BJ (cell line): ENCODE measurements at regions of chr11 and their contacts with region 1.

Region 1: DNA sequence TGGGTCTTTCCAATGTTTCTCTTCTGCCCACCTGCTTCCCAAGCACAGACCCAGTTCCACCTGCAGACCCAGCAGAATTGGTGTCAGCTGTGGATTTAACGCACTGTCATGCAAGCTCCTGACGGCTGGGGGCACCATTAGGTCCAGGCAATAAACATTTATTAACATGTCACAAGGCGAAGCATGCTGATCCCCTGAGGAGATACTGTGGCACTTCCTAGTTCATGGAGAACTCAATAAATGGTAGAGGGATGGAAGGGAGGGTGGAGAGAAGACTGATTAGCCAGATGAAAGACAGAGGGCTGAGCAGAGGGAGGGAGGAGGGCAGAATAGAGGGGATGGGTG is 68.3 kb upstream of the TSPAN18 start:
- DNase-seq: no peak
- H3K4me3 ChIP-seq: no peak overlapping the region
- H3K27me3 ChIP-seq: peaks cover 1% of the 10 kb centered on the region
- CTCF ChIP-seq: no peak

Region 2: DNA sequence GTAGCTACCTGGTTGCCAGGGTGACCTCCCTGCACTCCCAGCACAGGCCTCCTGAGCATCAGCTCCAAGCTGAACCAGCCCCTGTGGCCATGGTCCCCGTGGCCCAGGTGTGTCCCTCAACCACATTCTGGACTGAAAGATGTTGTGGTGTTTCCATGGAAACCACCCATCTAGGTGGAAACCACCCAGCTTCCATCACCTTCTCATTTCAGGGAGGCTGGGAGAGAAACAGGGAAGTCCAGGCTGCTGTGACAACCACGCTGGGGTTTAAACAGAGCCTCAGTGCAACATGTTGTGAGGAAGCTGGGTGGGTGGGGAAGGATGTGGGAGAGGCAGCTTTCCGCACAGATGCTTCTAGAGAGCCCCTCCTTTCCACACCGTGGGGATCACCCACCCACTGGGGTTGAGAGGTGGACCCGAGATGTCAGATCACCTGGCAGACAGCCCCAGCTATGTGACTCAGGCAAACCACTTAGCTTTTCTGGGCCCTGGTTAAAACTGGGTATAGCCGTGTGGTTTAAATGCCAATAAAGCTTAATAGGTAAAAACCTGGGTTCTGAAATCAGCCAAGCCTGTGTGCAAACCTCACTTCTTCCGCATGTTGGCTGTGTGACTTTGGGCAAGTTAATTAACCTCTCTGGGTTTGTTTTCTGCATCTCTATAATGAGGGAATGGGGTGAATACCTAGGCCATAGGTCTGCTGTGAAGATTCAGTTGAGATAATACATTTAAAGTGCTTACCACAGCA is 46.6 kb before region 1 on chr11:
- CTCF ChIA-PET with region 1: no interaction called
- POLR2A ChIA-PET with region 1: no interaction called
- DNase-seq: no peak
- H3K4me3 ChIP-seq: no peak overlapping the region
- H3K27me3 ChIP-seq: no peaks in the 10 kb centered on the region
- CTCF ChIP-seq: no peak

Region 3: DNA sequence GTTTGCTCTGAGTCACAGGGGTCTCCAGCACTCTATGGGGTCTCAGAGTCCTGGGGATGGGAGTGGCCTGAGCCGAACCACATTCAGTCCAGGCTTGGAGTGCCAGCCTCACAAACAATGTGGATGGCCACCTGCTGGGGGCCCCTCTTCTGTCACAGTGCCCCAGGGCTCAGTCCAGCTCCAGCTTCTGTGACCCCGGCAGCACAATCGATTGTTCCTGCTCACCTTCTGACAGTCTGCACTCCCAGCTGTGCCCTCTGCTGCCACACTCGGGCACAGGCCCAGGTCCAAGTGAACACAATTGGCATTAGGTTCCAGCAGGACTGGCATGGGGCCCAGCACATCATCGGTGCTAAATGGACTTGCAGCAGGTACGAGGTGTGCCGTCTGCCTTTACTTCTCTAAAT is 207.4 kb after region 1 on chr11:
- CTCF ChIA-PET with region 1: no interaction called
- POLR2A ChIA-PET with region 1: interaction called, 14 read pairs
- DNase-seq: no peak
- H3K4me3 ChIP-seq: no peak overlapping the region
- H3K27me3 ChIP-seq: peaks cover 10% of the 10 kb centered on the region
- CTCF ChIP-seq: no peak